HEK293 (cell line): ENCODE measurements at regions of chr4 and their contacts with region 1.

Region 1: DNA sequence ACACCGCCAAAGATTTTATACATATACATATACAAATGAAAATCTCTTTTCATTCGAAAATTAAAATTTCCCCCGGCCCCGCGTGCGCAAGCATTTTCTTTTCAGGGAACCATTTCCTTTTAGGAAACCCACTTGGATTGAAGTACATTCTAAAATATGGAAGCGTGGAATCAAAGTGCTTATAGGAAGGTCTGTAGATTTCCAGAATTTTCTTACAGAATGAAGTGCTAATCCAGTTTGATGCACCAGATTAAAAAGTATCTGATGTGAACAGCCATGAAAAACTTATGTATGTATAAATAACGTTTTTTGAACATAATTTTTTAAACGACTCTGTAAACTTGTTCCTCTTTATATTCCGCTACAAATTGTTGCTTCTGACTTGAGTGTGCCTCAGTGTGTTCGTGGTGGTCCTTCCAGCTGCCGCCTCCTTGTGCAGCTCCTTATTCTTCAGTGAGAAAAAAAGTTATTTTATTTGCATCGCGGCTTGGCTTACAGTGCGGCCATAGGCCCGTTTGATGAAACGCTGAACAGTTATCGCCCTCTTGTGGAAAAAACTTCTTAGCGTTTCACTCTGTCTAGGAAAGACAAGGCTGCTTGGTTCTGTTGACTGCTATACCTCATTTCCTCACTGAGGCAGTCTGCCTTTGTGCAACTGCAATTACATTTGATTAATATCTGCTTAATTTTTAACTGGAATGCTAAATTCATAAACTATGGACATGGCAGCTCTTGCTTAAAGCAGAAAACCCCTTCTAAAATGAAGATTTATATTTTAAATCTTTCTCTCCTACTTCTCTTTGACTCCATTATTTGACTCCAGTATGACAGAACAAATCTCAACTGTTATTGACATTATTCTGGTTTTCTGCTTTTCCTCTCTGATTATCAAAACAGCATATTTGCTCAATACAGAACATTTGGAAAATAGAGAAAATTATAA is 4.7 kb upstream of the NKX6-1 start:
- H3K4me3 ChIP-seq: no peak overlapping the region
- H3K27ac ChIP-seq: no peak overlapping the region
- H3K4me1 ChIP-seq: no peaks in the 10 kb centered on the region
- CTCF ChIP-seq: 0 out of 2 replicates have a peak, but pooled peaks have one; percentile 44

Region 2: DNA sequence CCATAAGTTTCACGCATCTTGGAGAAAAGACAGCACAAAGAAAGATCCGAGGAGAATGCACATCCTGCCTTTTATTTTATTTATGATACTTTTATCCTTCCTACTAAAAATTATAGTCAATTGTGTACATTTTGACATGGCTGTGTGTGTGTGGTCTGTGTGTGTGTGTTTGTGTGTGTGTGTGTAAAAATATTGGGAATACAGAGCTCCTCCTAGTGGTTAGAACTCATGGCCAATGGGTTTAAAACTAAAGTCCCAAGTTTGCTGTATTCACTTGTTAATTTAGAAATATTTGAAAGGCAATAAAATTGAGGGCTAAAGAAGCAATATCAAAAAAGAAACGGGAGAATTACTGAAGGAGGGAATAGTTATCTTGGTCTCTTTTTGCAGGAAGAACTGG is 52.2 kb before region 1 on chr4:
- CTCF ChIA-PET with region 1: interaction called, 11 read pairs
- POLR2A ChIA-PET with region 1: no interaction called
- H3K4me3 ChIP-seq: no peak overlapping the region
- H3K27ac ChIP-seq: no peak overlapping the region
- H3K4me1 ChIP-seq: no peaks in the 10 kb centered on the region
- CTCF ChIP-seq: 0 out of 2 replicates have a peak, but pooled peaks have one; percentile 25

Region 3: GRCh38 chr4:85419103-85419502 is 915.3 kb after region 1 on chr4:
- CTCF ChIA-PET with region 1: no interaction called
- POLR2A ChIA-PET with region 1: no interaction called
- H3K4me3 ChIP-seq: no peak overlapping the region
- H3K27ac ChIP-seq: no peak overlapping the region
- H3K4me1 ChIP-seq: no peaks in the 10 kb centered on the region
- CTCF ChIP-seq: no peak